Activated naive CD4-positive, alpha-beta T cell treated with anti-CD3 and anti-CD28 coated beads for 36 hours (primary cell): ENCODE measurements at regions of chr17 and their contacts with region 1.

Region 1: DNA sequence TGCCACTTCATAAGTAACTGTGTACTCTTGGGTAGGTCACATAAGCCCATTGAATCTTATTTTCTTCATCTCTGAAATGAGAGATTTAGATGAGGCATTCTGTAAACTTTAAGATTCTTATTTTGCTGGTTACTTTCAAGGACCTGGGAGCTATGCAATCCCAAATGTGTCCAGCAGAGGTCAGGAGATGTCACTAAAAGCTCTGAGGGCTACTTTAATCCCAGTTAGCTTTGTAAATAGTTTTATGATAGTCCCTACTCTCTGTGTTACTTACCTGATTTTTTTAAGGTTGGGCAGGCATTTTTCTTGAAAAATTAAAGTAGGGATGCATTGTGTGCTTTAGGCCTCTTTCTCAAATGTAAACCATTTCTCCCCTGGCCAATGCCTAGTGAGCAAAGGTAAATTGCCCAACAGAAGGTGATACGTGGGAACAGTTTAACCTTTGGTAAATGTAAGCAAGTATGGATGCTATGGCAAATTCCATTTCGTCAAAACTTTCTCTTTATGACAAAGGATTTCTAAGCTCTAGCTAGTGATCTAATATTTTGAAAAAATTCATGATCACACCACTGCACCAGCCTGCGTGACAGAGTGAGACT is 57.1 kb upstream of the WSB1 start:
- DNase-seq: peak; percentile 90
- H3K4me3 Mint-ChIP-seq: no peak overlapping the region
- H3K27ac Mint-ChIP-seq: no peak overlapping the region
- H3K4me1 Mint-ChIP-seq: peaks cover 13% of the 10 kb centered on the region
- H3K27me3 Mint-ChIP-seq: no peaks in the 10 kb centered on the region

Region 2: DNA sequence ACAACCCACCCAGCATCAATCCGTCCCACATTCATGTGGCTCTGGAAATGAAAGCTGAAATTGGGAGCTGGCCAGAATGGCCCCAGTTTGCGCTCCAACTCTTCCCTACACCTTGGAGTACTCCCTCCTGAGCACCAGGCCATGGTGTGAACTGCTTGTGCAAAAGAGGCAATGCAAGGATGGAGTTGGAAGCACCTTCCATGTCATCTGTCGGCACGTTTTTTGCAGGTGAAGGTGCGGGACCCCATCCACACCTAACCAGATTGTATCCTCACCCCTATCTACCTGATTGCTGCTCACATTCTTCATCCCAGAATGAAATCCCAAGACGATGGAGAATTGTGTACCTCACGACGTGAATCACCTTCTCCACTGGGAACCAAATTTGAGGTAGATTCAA is 79.5 kb before region 1 on chr17:
- CTCF ChIA-PET with region 1: no interaction called
- intact Hi-C with region 1: no loop called
- DNase-seq: no peak
- H3K4me3 Mint-ChIP-seq: no peak overlapping the region
- H3K27ac Mint-ChIP-seq: no peak overlapping the region
- H3K4me1 Mint-ChIP-seq: no peaks in the 10 kb centered on the region
- H3K27me3 Mint-ChIP-seq: no peaks in the 10 kb centered on the region

Region 3: DNA sequence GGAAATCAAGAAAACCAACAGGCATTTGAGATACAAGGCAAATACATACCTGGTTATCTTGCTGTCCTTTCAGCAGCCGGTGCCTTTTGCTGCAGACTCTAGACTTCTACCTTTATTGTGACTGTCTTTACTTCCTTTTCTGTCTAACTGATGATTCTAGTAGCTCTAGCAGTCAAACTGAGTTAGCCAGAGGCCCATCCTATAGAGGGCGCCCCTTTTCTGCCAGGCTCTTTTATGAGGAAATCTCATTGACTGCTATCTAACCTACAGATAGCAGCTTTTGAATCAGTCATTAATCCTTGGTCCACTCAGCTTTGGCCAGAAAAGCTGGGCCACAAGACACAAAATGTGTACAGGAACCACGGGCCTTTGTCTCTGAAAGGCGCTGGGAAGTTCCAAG is 30.4 kb before region 1 on chr17:
- CTCF ChIA-PET with region 1: interaction called, 10 read pairs
- intact Hi-C with region 1: no loop called
- DNase-seq: peak; percentile 30
- H3K4me3 Mint-ChIP-seq: no peak overlapping the region
- H3K27ac Mint-ChIP-seq: no peak overlapping the region
- H3K4me1 Mint-ChIP-seq: peaks cover 5% of the 10 kb centered on the region
- H3K27me3 Mint-ChIP-seq: peaks cover 4% of the 10 kb centered on the region

Region 4: DNA sequence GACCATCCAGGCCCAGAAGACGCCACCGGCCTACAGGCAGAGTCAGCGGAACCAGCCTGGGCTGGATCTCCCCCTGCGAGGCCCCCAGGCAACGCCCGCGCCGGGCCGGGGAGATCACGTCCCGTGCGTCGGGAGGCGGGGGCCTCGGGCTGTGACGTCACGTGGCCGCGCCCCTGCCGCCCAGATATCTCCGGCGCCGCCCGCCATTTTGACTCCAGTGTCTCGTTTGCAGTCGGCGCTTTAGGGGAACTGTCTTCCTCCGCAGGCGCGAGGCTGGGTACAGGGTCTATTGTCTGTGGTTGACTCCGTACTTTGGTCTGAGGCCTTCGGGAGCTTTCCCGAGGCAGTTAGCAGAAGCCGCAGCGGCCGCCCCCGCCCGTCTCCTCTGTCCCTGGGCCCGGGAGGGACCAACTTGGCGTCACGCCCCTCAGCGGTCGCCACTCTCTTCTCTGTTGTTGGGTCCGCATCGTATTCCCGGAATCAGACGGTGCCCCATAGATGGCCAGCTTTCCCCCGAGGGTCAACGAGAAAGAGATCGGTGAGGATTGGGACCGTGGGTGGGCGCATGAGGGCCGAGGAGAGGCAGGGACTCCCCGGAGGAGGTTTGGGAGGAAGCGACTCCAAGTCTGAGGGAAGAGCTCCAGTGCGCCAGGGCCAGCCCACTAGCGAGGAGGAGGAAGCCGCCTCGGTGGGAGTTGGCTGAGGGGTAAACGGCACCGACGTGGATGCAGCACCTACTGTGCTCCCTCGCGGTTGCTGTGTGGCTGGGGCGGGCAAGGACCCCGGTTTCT is 57.3 kb after region 1 on chr17 and contains the start of gene WSB1:
- CTCF ChIA-PET with region 1: interaction called, 29 read pairs
- intact Hi-C with region 1: no loop called
- DNase-seq: peak; percentile 91
- H3K4me3 Mint-ChIP-seq: peak within 1 kb of the TSS; percentile 96
- H3K27ac Mint-ChIP-seq: peak within 1 kb of the TSS; percentile 99
- H3K4me1 Mint-ChIP-seq: peaks cover 36% of the 10 kb centered on the region
- H3K27me3 Mint-ChIP-seq: no peaks in the 10 kb centered on the region
- total RNA-seq, gene WSB1: 112 to 118 TPM

Region 5: GRCh38 chr17:27332485-27333409 is 95.9 kb after region 1 on chr17:
- CTCF ChIA-PET with region 1: interaction called, 110 read pairs
- intact Hi-C with region 1: loop called (anchors 1 kb)
- DNase-seq: peak; percentile 97
- H3K4me3 Mint-ChIP-seq: peak overlapping the region; percentile 75
- H3K27ac Mint-ChIP-seq: peak overlapping the region; percentile 74
- H3K4me1 Mint-ChIP-seq: peaks cover 20% of the 10 kb centered on the region
- H3K27me3 Mint-ChIP-seq: peaks cover 3% of the 10 kb centered on the region

Region 6: DNA sequence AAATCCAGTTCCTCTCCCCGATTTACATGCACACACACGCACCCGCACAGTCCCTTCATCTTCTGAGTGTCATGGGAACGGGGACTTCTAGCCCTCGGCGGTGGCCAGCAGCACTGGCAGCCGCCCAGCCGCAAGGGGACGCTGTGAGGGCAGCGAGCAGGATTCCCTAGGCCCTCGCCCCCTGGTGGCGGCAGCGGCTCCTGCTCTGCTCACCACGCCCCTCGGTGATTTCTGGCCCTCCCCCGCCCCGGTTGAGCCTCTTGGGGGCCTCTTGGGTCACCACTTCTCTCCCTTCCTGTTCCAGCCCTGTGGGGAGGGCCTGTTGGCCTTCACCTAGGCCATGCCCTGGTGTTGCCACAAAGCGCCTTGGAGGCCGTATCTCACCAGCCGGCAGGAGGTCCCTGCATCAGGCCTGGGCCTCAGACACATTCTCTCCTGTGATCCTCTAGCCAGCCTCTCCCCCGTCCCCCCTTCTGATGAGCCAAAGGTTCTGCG is 144.2 kb after region 1 on chr17:
- CTCF ChIA-PET with region 1: interaction called, 14 read pairs
- intact Hi-C with region 1: no loop called
- DNase-seq: peak; percentile 87
- H3K4me3 Mint-ChIP-seq: no peak overlapping the region
- H3K27ac Mint-ChIP-seq: no peak overlapping the region
- H3K4me1 Mint-ChIP-seq: no peaks in the 10 kb centered on the region
- H3K27me3 Mint-ChIP-seq: peaks cover 24% of the 10 kb centered on the region

Region 7: DNA sequence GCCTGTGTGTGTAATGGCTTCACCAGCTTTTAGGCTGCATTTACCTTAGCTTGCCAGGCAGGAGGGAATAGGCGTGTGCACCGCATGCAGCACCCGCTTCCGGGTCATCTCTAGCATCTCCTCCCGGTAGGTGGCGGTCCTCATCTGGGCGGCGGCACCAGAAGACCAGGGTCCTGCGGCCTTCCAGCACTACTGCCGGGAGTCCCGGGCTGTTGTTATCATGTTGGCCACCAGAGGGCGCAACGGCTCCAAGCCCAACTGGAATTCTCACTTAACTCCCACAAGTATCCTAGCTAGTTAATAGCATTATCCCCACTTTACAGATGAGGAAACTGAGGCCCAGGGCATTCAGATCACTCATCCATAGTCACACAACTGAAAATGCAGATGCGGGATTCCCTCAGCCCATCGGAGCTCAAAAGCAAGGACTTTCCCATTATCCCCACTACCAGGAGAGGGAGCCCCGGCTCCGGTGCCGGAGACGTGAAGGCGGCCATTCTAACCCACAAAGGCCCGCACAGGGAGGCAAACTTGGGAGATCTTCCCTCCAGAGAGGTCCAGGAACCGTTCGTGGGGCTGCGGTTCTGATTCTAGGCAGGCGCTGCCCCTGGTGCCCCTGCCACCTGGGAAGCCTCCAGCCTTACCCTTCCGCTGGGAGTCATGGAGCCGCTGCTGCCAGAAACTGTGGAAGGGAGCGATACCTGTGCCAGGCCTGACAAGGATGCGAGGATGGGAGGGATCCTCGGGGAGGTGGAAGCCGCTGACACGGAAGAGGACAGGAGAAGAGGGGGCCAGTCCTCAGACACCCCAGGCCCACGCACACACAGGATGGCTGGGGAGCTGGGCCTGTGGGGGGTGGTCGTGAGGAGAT is 418.1 kb after region 1 on chr17:
- CTCF ChIA-PET with region 1: interaction called, 9 read pairs
- intact Hi-C with region 1: loop called (anchors 1 kb)
- DNase-seq: peak; percentile 82
- H3K4me3 Mint-ChIP-seq: no peak overlapping the region
- H3K27ac Mint-ChIP-seq: no peak overlapping the region
- H3K4me1 Mint-ChIP-seq: peaks cover 6% of the 10 kb centered on the region
- H3K27me3 Mint-ChIP-seq: no peaks in the 10 kb centered on the region